ENCODE measurements at regions of chr5 and their contacts with region 1.

Region 1: DNA sequence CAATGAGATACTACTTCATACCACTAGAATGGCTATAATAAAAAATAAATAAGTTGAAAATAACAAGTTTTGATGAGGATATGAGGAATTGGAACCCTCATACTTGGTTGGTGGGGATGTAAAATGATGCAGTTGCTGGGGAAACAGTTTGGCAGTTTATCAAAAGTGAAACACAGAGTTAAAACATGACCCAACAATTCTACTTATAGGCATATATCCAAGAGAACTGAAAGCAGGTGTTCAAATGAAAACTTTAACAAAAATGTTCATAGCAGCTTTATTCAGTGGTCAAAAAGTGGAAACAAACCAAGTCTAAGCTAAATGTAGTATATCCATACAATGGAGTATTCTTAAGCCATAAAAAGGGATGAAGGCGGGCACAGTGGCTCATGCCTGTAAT is 13.1 kb upstream of the LHFPL2 start:
- DNase-seq: no peak
- H3K4me3 ChIP-seq: no peak overlapping the region
- H3K27ac ChIP-seq: no peak overlapping the region
- H3K4me1 ChIP-seq: peaks cover 0 to 2% (median 0%) of the 10 kb centered on the region in 4 donors
- H3K27me3 ChIP-seq: no peaks in the 10 kb centered on the region
- CTCF ChIP-seq: no peak
- EP300 ChIP-seq: no peak
- POLR2A ChIP-seq: no peak

Region 2: GRCh38 chr5:78433972-78434371 is 227.7 kb before region 1 on chr5:
- in situ Hi-C with region 1: no loop called
- intact Hi-C with region 1: no loop called
- DNase-seq: no peak
- H3K4me3 ChIP-seq: no peak overlapping the region
- H3K27ac ChIP-seq: no peak overlapping the region
- H3K4me1 ChIP-seq: no peaks in the 10 kb centered on the region
- H3K27me3 ChIP-seq: no peaks in the 10 kb centered on the region
- CTCF ChIP-seq: no peak
- EP300 ChIP-seq: no peak
- POLR2A ChIP-seq: no peak

Region 3: GRCh38 chr5:78699565-78700241 is 38.0 kb after region 1 on chr5:
- in situ Hi-C with region 1: no loop called
- intact Hi-C with region 1: no loop called
- DNase-seq: peak; percentile 47
- H3K4me3 ChIP-seq: no peak overlapping the region
- H3K27ac ChIP-seq: peak overlapping the region in 1 of 4 donors; percentile 1
- H3K4me1 ChIP-seq: no peaks in the 10 kb centered on the region
- H3K27me3 ChIP-seq: no peaks in the 10 kb centered on the region
- CTCF ChIP-seq: no peak
- EP300 ChIP-seq: no peak
- POLR2A ChIP-seq: no peak

Region 4: GRCh38 chr5:78886341-78887230 is 224.9 kb after region 1 on chr5:
- in situ Hi-C with region 1: no loop called
- intact Hi-C with region 1: loop called (anchors 10 kb)
- DNase-seq: no peak
- H3K4me3 ChIP-seq: no peak overlapping the region
- H3K27ac ChIP-seq: no peak overlapping the region
- H3K4me1 ChIP-seq: peaks cover 0 to 5% (median 0%) of the 10 kb centered on the region in 4 donors
- H3K27me3 ChIP-seq: no peaks in the 10 kb centered on the region
- CTCF ChIP-seq: peak; percentile 34 to 55 (median 45)
- EP300 ChIP-seq: no peak
- POLR2A ChIP-seq: no peak